Activated CD8-positive, alpha-beta T cell treated with anti-CD3 and anti-CD28 coated beads for 36 hours (primary cell): ENCODE measurements at regions of chr14 and their contacts with region 1.

Region 1: GRCh38 chr14:22556990-22557623 is 31.9 kb downstream of the DAD1 start:
- DNase-seq: peak; percentile 93
- ATAC-seq: peak; percentile 5
- H3K4me3 Mint-ChIP-seq: peak overlapping the region; percentile 82
- H3K27ac Mint-ChIP-seq: peak overlapping the region; percentile 94
- H3K4me1 Mint-ChIP-seq: peaks cover 84% of the 10 kb centered on the region
- H3K27me3 Mint-ChIP-seq: peaks cover 3% of the 10 kb centered on the region
- CTCF ChIP-seq: peak; percentile 100

Region 2: DNA sequence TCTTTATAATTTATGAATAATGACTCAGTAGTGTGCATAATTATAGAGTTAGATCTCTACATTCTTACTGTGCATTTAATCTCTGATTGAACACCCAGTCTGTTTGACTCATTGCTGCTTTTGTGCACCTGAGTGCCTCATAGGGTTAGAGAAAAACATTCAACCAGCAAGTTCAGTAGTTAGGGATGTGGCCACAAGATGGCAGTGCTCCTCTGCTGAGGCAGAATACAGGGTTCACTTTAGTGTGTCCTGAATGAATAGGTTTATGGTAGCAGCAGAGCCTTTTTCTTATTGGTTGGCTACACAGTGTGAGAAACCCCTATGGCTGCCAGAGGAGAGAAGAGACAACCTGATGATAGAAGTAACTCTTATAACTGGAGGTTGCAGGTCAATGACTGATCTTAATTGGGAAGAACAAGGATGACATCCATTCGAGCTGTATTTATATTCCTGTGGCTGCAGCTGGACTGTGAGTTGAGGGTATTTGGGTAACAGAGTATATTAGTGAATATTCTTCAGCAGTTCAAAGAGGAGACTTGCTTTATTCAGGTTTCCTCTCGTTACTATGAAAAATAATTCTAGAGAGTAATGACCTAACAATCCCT is 688.6 kb before region 1 on chr14:
- CTCF ChIA-PET with region 1: no interaction called
- POLR2A ChIA-PET with region 1: no interaction called
- intact Hi-C with region 1: loop called (anchors 5 kb)
- DNase-seq: peak; percentile 93
- ATAC-seq: peak; percentile 90
- H3K4me3 Mint-ChIP-seq: peak overlapping the region; percentile 60
- H3K27ac Mint-ChIP-seq: peak overlapping the region; percentile 75
- H3K4me1 Mint-ChIP-seq: peaks cover 22% of the 10 kb centered on the region
- H3K27me3 Mint-ChIP-seq: no peaks in the 10 kb centered on the region
- CTCF ChIP-seq: peak; percentile 84

Region 3: DNA sequence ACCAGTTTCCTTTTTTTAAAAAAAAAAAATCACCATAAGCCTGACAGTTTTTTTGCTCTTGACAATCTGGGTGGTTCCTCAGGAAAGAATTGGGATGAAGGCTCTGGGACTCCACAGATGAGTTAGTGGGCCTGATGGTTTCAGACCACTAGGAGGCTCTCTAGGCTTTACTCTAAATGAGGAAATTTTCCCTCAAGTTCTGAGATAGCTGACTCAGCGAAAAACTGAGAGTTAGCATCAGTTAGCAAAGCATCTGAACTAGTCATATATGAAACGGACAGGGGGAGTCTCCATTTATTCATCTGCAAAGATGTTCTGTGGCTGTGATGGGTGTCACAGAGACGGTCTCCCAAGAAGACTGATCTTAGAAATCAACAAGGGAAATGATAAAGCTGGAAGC is 569.2 kb before region 1 on chr14:
- CTCF ChIA-PET with region 1: interaction called, 8 read pairs
- POLR2A ChIA-PET with region 1: interaction called, 21 read pairs
- intact Hi-C with region 1: no loop called
- DNase-seq: peak; percentile 38
- ATAC-seq: peak; percentile 74
- H3K4me3 Mint-ChIP-seq: peak overlapping the region; percentile 54
- H3K27ac Mint-ChIP-seq: peak overlapping the region; percentile 89
- H3K4me1 Mint-ChIP-seq: peaks cover 27% of the 10 kb centered on the region
- H3K27me3 Mint-ChIP-seq: peaks cover 1% of the 10 kb centered on the region
- CTCF ChIP-seq: peak; percentile 50

Region 4: GRCh38 chr14:22303589-22304195 is 253.4 kb before region 1 on chr14:
- CTCF ChIA-PET with region 1: interaction called, 3 read pairs
- POLR2A ChIA-PET with region 1: no interaction called
- intact Hi-C with region 1: loop called (anchors 10 kb)
- DNase-seq: no peak
- ATAC-seq: no peak
- H3K4me3 Mint-ChIP-seq: peak overlapping the region; percentile 66
- H3K27ac Mint-ChIP-seq: peak overlapping the region; percentile 74
- H3K4me1 Mint-ChIP-seq: no peaks in the 10 kb centered on the region
- H3K27me3 Mint-ChIP-seq: no peaks in the 10 kb centered on the region
- CTCF ChIP-seq: no peak

Region 5: DNA sequence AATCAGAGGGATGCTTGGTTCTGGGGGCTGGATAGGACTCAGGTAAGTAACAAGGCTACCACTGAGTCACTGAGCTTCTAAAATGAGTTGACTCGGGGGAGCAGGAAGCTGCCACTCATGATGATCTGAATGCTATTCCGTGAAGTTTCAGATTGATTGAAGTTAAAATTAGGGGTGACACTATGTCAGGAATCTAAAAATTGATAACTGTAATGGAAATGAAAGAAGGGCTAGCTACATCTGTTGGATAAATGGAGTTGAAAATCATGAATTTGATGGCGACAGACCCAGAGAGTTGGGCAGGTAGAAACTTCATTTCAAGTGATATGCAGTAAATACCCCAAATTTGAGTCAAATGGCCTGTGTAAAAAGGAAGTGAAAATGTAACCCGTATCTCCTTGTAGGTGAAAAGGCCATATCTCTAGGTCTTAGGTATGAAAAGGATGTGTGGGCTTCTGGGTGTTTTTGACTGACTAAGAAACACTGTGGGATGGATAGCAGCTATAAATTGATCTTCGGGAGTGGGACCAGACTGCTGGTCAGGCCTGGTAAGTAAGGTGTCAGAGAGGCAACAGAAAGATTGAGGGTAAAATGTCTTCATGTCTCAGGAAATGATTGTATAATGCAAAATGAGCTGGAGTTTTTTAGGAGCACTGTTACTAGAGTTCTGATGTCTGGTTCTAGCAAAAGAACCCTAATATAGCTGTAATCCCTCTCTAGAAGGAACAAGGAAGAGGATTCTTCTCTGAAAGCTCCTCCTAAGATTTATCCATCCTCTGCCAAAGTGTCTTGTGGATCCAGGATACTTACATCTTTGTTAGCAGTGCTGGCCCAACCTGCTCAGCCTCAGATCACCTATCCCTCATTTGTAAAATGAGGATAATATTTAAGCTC is 25.4 kb before region 1 on chr14:
- CTCF ChIA-PET with region 1: interaction called, 72 read pairs
- POLR2A ChIA-PET with region 1: interaction called, 496 read pairs
- intact Hi-C with region 1: no loop called
- DNase-seq: peak; percentile 66
- ATAC-seq: peak; percentile 71
- H3K4me3 Mint-ChIP-seq: peak overlapping the region; percentile 79
- H3K27ac Mint-ChIP-seq: peak overlapping the region; percentile 94
- H3K4me1 Mint-ChIP-seq: peaks cover 77% of the 10 kb centered on the region
- H3K27me3 Mint-ChIP-seq: no peaks in the 10 kb centered on the region
- CTCF ChIP-seq: no peak

Region 6: GRCh38 chr14:22653012-22653621 is 96.0 kb after region 1 on chr14:
- CTCF ChIA-PET with region 1: interaction called, 10 read pairs
- POLR2A ChIA-PET with region 1: interaction called, 4 read pairs
- intact Hi-C with region 1: no loop called
- DNase-seq: peak; percentile 66
- ATAC-seq: peak; percentile 89
- H3K4me3 Mint-ChIP-seq: no peak overlapping the region
- H3K27ac Mint-ChIP-seq: no peak overlapping the region
- H3K4me1 Mint-ChIP-seq: no peaks in the 10 kb centered on the region
- H3K27me3 Mint-ChIP-seq: peaks cover 2% of the 10 kb centered on the region
- CTCF ChIP-seq: peak; percentile 80